Head of caudate nucleus (tissue), 42 donors: ENCODE measurements at regions of chr7 and their contacts with region 1.

Region 1: GRCh38 chr7:30276203-30276900 is 8.0 kb upstream of the ZNRF2 start:
- DNase-seq: peak in 40 of 42 donors; percentile 17 to 86 (median 66)

Region 2: DNA sequence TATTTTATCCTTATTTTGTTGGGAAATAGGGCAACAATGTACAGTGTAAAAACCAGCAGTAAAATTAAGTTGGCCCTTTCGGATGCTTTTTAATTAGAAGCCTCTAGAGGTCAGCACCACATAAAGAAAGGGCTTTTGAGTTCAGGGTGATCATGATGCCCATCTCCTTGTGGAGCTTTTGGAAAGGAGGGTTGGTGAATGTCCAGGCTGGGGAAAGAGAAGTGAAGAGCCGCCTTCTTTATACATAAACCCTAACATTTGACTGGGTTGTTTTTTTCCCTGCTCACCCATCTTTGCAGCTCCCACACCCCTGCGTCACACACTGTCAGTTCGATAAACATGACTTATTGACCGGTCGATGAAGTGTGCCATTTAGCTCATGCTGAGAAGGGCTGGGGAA is 111.8 kb before region 1 on chr7:
- intact Hi-C with region 1: loop called (anchors 5 kb)
- DNase-seq: peak in 17 of 42 donors; percentile 30 to 76 (median 51)

Region 3: GRCh38 chr7:30225863-30226613 is 50.3 kb before region 1 on chr7:
- intact Hi-C with region 1: no loop called
- DNase-seq: peak; percentile 34 to 88 (median 68)

Region 4: DNA sequence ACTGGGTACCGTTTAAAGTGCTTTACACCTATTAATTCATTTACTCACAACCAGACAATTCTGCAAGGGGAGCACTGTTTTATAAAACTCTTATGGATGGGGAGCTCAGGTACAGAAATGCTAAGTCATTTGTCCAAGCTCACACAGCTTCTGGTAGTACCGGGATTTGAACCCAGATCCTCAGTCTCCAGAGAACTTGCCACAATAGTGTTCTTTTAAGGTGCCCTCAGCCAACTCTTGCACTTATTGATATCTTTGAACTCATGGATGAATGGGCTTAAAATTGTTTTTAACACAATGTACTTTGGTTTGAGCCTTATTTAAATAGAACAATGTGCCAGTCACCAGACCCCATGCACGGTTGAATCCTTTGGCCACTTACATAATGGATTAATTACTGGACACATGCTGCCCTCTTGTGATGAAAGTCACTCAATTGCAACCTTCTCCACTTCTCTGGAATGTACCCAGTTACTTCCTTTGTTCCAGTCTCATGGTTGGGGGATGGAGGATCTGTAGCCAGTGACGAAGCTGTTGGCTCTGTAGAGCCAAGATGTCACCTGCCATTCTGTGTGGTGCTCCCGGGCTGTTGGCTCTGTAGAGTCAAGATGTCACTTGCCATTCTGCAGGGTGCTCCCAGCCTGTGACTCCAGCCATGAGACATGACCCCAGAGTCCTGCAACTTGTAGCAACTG is 136.6 kb after region 1 on chr7:
- intact Hi-C with region 1: loop called (anchors 5 kb)
- DNase-seq: peak in 14 of 42 donors; percentile 12 to 76 (median 40)

Region 5: GRCh38 chr7:30564243-30564892 is 288.0 kb after region 1 on chr7:
- intact Hi-C with region 1: loop called (anchors 5 kb)
- DNase-seq: peak; percentile 74 to 95 (median 90)